A549 (cell line): ENCODE measurements at regions of chr3 and their contacts with region 1.

Region 1: DNA sequence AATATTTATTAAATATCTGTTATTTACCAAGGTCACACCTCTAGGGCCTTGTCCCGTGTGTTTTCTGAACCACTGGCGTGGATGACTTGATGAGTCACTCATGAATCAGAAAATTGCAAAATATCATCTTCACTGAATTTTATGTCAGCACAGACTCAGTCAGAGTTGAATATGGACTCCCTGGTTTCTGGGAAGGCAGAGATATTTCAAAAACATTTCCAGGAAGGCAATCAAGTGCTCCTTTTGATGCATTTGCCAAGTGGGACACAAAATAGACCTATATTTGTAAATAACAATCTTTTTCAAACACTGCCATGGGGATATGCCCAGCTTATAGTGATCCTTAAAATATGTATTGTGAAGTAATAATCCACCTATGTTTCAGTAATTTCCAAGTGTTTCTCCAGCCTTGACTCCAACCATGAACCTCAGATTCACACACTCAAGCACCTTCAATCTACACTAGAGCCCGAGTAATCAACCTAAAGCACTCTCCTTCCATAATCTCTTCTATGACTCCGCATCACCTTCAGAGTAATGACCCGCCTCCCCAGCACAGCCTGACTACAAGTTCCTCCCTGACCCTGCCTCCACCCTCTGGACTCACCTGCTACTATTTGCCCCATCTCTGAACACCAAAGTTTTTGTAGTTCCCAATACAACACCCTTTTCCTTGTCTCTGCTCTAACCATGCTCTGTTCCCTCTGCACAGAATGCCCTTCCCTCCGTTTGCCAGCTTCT is 24.3 kb downstream of the DPH3 start:
- DNase-seq: peak; percentile 38 to 71
- ATAC-seq: peak; percentile 72 to 80
- H3K4me3 ChIP-seq: no peak overlapping the region
- H3K27ac ChIP-seq: peak overlapping the region; percentile 53 to 63; a peak in 5 of 6 replicates
- H3K4me1 ChIP-seq: peaks cover 22% of the 10 kb centered on the region
- CTCF ChIP-seq: no peak
- EP300 ChIP-seq: no peak
- POLR2A ChIP-seq: no peak
- RAD21 ChIP-seq: no peak

Region 2: GRCh38 chr3:16227566-16227965 is 12.9 kb before region 1 on chr3:
- CTCF ChIA-PET with region 1: interaction called, 11 read pairs
- POLR2A ChIA-PET with region 1: no interaction called
- DNase-seq: no peak
- ATAC-seq: no peak
- H3K4me3 ChIP-seq: no peak overlapping the region
- H3K27ac ChIP-seq: no peak overlapping the region
- H3K4me1 ChIP-seq: no peaks in the 10 kb centered on the region
- CTCF ChIP-seq: no peak
- EP300 ChIP-seq: no peak
- POLR2A ChIP-seq: no peak
- RAD21 ChIP-seq: no peak